ENCODE measurements at regions of chr13 and their contacts with region 1.

Region 1: DNA sequence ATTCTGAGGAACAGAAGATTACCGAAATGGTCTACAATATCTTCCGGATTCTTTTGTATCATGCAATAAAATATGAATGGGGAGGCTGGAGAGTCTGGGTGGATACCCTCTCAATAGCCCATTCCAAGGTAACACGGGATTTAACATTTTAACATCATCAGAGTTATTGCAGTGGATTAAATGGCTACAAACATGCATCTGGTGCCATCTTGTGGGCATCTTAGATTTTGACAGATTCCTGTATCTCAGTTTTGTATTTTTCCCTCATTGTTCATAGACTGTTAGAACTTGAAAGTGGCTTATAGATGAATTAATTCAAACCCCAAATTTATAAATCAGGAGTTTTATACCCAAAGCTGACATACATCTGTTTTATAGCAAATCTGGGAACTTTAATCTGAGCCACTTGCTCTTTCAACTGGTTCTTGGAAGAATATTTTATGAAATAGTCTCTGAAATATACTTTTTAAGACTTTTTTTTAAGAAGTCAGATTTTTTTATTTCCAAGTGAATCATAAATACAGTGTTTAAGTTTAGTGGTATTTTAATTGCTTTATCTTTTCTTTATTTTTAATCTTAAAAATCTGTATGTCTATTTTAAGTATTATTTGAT is 215.2 kb downstream of the NBEA start:
- DNase-seq: peak in 1 of 6 donors; percentile 33
- ATAC-seq: peak; percentile 64 to 82 (median 79)
- H3K4me3 ChIP-seq: no peak overlapping the region
- H3K27ac ChIP-seq: no peak overlapping the region
- H3K4me1 ChIP-seq: no peaks in the 10 kb centered on the region
- H3K27me3 ChIP-seq: no peaks in the 10 kb centered on the region
- CTCF ChIP-seq: peak in 3 of 4 donors; percentile 24 to 42 (median 38)

Region 2: DNA sequence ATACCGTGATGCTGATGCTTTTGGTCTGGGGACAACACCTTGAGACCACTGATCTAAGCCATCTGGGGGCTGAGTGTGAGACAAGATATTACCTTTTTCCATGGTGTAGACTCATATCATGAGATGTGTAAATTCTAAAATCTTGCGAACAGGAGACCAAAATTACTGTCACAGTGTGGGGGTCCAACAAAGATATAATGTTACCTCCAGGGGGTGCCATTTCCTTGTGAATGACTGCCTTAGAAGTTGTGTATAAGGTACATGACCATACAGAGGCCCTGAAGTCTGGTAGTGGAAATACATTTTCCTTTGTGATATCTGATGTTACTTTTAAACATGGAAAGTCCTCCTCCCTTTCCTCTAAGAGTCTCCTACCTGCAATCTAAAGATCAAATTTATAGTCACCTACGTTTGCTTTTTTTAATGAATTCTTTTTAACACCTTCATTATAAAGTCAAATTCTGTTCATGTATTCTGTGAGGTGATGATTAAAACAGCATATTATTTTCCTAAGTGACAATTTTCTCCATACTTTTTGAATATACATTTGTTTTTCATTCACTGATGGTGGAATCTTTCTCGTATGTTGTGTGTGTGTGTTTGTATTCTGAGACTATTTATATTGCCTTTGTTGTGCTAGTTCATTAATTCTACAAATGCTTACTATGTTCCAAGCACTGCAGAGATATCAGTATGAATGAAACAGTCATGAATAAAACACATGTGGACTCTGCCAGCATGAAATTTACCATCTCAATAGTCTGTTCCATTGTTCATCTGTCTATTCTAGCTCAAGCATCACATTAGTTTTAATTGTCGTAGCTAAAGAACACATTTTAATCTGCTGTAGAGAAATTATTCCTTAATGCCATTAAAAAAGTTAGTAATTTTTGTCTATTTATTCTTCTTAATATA is 1225.6 kb before region 1 on chr13:
- intact Hi-C with region 1: loop called in 1 of 3 experiments (anchors 10 kb)
- DNase-seq: peak in 1 of 6 donors; percentile 15
- ATAC-seq: peak in 3 of 4 donors; percentile 80 to 87 (median 82)
- H3K4me3 ChIP-seq: no peak overlapping the region
- H3K27ac ChIP-seq: no peak overlapping the region
- H3K4me1 ChIP-seq: peaks cover 5 to 11% (median 10%) of the 10 kb centered on the region in 3 donors
- H3K27me3 ChIP-seq: no peaks in the 10 kb centered on the region
- CTCF ChIP-seq: peak in 2 of 4 donors; percentile 15 to 23

Measured in pancreas (tissue), 10 donors.